IMR-90 (cell line): ENCODE measurements at regions of chr13 and their contacts with region 1.

Region 1: DNA sequence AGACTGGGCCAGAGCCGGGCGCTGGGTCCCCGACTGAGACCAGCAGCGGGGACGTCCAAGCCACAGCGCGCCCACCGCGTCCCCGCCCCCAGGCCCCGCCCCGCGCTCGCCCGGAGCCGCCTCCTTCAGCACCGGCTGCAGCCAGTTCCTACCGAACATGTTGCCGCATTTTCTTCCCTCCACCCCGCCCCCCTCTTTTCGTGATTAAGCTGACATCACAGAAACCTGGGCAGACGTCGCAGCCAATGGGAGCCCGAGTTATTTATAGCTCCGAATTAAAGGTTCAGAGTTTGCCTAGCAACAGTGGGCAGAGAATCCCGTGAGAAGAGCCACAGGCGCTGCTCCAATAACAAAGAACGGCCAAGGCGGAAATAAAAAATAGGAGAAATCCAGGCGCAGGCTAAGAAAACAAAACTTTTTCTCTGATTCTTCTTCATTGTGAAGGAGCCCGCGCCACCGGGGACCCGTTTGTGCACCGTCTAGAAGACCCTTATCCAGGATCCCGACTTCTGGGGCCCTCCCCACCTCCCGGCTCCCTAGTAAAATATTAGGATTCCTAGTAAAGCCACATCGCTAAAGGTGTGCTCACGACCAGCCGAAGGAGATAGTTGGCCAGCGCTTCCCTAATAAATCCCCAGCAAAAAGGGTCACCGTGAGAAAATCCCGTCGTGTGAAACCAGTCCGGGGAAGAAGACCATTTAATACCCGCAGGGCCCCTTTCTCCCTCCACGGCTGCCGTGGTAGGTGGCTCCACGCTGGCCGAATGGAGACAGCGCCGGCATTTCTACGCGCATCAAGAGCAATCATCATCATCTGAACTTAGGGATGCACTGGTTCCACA is 61.7 kb downstream of the SERP2 start:
- DNase-seq: peak; percentile 98
- ATAC-seq: peak; percentile 64
- H3K4me3 ChIP-seq: peak overlapping the region; percentile 77
- H3K27ac ChIP-seq: peak overlapping the region; percentile 74
- H3K4me1 ChIP-seq: peaks cover 8% of the 10 kb centered on the region; the same call in 1 of the 2 replicates
- H3K27me3 ChIP-seq: no peaks in the 10 kb centered on the region
- CTCF ChIP-seq: 0 out of 2 replicates have a peak, but pooled peaks have one; percentile 1
- POLR2A ChIP-seq: peak; percentile 89
- RAD21 ChIP-seq: no peak

Region 2: DNA sequence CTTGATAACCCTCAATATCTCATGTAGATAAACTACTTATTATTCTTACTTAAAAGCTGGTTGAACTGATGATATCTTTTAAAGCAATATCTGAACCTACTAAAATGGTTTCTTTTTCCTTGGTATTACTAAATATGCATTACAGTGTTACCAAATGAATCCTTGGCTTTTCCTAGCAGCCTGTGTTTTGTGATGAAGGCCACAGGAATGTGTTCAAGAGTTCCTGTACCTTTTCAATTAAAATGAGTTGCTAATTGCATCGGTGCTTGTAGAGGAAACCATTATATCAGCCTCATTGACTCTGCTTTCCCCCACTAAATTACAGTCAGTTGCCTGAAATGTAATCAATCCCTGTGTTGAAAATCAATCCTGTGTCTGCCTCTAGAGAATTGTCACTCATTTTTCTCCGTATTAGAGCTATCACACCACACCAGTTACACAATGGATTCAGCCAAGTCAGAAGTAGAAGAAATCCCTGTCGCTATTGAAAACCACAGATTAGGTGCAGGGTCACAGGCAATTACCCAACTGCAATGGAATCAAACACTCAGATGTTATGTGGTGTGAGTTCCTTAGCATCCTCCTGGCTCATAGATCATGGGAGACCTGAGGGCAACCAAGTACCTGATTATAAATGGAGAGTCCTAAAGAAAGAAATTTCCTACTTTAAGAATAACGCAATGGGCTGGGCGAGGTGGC is 1640.6 kb before region 1 on chr13:
- CTCF ChIA-PET with region 1: no interaction called
- POLR2A ChIA-PET with region 1: no interaction called
- dilution Hi-C with region 1: no loop called
- in situ Hi-C with region 1: no loop called
- intact Hi-C with region 1: no loop called
- DNase-seq: no peak
- ATAC-seq: no peak
- H3K4me3 ChIP-seq: no peak overlapping the region
- H3K27ac ChIP-seq: no peak overlapping the region
- H3K4me1 ChIP-seq: no peaks in the 10 kb centered on the region
- H3K27me3 ChIP-seq: no peaks in the 10 kb centered on the region
- CTCF ChIP-seq: no peak
- POLR2A ChIP-seq: no peak
- RAD21 ChIP-seq: no peak

Region 3: GRCh38 chr13:43905435-43906031 is 529.8 kb before region 1 on chr13:
- CTCF ChIA-PET with region 1: interaction called, 11 read pairs
- POLR2A ChIA-PET with region 1: interaction called, 5 read pairs
- dilution Hi-C with region 1: no loop called
- in situ Hi-C with region 1: loop called (anchors 5 kb)
- intact Hi-C with region 1: loop called (anchors 1 kb)
- DNase-seq: peak; percentile 77
- ATAC-seq: peak; percentile 82
- H3K4me3 ChIP-seq: no peak overlapping the region
- H3K27ac ChIP-seq: no peak overlapping the region
- H3K4me1 ChIP-seq: peaks cover 3% of the 10 kb centered on the region
- H3K27me3 ChIP-seq: no peaks in the 10 kb centered on the region; the same call in 1 of the 2 replicates
- CTCF ChIP-seq: peak; percentile 81
- POLR2A ChIP-seq: no peak
- RAD21 ChIP-seq: peak; percentile 88

Region 4: DNA sequence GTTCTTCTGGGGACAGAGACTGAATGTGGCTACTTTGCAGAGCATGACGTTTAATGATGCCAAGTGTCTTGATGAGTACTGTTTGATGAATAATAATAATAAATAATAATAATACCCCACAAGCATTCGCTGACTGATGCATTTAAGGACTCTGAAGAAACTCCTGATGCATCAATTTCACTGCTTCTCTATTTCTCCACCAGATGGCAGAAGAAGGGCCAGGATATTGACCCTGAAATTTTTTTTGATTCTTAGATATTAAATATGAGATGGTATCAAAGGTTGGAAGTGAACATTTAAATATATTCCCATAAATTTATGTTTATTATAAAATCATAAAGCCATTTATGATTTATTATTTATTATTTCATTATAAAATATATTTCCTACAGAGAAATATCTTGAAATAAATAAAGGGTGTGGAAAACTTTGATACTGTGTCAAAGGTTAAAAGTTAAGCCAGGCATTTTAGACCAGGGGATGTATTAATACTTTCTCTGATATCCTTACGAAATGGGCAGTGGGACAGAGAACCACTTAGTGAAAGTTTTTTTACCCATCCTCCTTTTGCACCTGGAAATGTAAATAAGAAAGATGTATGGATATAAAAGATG is 384.8 kb before region 1 on chr13:
- CTCF ChIA-PET with region 1: interaction called, 3 read pairs
- POLR2A ChIA-PET with region 1: interaction called, 7 read pairs
- dilution Hi-C with region 1: no loop called
- in situ Hi-C with region 1: loop called (anchors 5 kb)
- intact Hi-C with region 1: loop called (anchors 1 kb)
- DNase-seq: peak; percentile 52
- ATAC-seq: no peak; the same call in 1 of the 2 replicates
- H3K4me3 ChIP-seq: no peak overlapping the region
- H3K27ac ChIP-seq: no peak overlapping the region
- H3K4me1 ChIP-seq: peaks cover 13% of the 10 kb centered on the region
- H3K27me3 ChIP-seq: peaks cover 5% of the 10 kb centered on the region
- CTCF ChIP-seq: peak; percentile 75
- POLR2A ChIP-seq: no peak
- RAD21 ChIP-seq: peak; percentile 78

Region 5: DNA sequence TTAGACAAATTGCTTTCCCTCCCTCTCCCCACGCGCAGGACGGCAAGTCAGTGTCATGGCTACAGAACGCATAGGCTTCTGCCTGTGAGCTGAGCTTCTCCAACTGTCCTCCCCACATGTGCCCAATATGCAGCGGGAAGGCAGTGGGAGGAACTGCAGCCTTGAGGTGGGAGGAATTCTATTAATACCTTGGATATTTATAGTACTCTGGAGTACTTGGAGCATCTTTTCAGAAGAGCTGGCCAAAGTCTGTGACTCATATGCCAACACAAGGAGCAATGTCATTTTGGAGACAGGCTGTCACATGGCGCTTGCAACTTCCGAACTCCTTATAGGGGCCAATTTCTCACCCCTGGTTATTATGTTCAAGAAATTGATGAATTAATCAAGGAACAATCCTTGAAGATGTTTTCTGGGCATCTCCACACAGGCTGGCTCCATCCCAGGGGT is 306.8 kb before region 1 on chr13:
- CTCF ChIA-PET with region 1: interaction called, 4 read pairs
- POLR2A ChIA-PET with region 1: interaction called, 21 read pairs
- dilution Hi-C with region 1: no loop called
- in situ Hi-C with region 1: no loop called
- intact Hi-C with region 1: loop called (anchors 5 kb)
- DNase-seq: peak; percentile 65
- ATAC-seq: peak; percentile 57
- H3K4me3 ChIP-seq: no peak overlapping the region
- H3K27ac ChIP-seq: no peak overlapping the region
- H3K4me1 ChIP-seq: peaks cover 19% of the 10 kb centered on the region
- H3K27me3 ChIP-seq: no peaks in the 10 kb centered on the region
- CTCF ChIP-seq: no peak
- POLR2A ChIP-seq: no peak
- RAD21 ChIP-seq: no peak; the same call in 1 of the 2 replicates

Region 6: DNA sequence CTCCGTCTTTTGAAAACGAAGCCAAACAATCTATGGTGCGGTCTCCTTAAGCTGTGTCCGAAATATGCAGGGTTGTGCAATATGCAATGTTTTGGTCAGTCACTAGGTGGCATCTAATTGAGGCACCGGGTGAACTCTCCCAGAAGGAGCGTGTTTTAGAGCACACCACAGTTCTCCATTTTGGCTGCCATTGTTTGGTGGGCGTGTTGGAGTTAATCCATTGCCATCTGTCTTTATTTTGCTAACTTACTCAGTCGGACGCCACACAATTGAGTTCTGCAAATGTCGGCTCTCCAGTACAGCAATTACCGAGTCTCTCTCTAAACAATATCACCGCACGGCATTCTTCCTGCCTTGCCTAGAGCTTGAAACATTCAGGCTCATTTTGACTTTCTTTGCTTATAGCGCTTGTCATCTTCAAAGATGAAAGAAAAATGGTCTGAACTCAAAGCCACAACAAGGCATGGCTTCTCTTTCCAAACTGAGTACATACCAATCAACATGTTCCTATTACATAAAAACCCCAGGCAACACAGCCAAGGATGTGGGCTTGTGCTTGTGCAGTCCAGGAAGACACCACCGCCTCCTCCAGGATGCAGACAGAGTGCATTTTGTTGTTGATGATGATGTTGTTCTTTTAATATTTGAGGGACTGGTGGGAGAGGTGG is 243.7 kb before region 1 on chr13:
- CTCF ChIA-PET with region 1: interaction called, 4 read pairs
- POLR2A ChIA-PET with region 1: no interaction called
- dilution Hi-C with region 1: no loop called
- in situ Hi-C with region 1: no loop called
- intact Hi-C with region 1: loop called (anchors 1 kb)
- DNase-seq: peak; percentile 70
- ATAC-seq: peak; percentile 65
- H3K4me3 ChIP-seq: no peak overlapping the region
- H3K27ac ChIP-seq: no peak overlapping the region
- H3K4me1 ChIP-seq: peaks cover 4% of the 10 kb centered on the region; the same call in 1 of the 2 replicates
- H3K27me3 ChIP-seq: no peaks in the 10 kb centered on the region
- CTCF ChIP-seq: peak; percentile 63
- POLR2A ChIP-seq: no peak
- RAD21 ChIP-seq: peak; percentile 68

Region 7: GRCh38 chr13:44243198-44243857 is 192.0 kb before region 1 on chr13:
- CTCF ChIA-PET with region 1: no interaction called
- POLR2A ChIA-PET with region 1: no interaction called
- dilution Hi-C with region 1: no loop called
- in situ Hi-C with region 1: loop called (anchors 10 kb)
- intact Hi-C with region 1: loop called (anchors 1 kb)
- DNase-seq: peak; percentile 74
- ATAC-seq: peak; percentile 54
- H3K4me3 ChIP-seq: no peak overlapping the region
- H3K27ac ChIP-seq: no peak overlapping the region
- H3K4me1 ChIP-seq: peaks cover 2% of the 10 kb centered on the region; the same call in 1 of the 2 replicates
- H3K27me3 ChIP-seq: no peaks in the 10 kb centered on the region
- CTCF ChIP-seq: peak; percentile 59
- POLR2A ChIP-seq: no peak
- RAD21 ChIP-seq: peak; percentile 69

Region 8: DNA sequence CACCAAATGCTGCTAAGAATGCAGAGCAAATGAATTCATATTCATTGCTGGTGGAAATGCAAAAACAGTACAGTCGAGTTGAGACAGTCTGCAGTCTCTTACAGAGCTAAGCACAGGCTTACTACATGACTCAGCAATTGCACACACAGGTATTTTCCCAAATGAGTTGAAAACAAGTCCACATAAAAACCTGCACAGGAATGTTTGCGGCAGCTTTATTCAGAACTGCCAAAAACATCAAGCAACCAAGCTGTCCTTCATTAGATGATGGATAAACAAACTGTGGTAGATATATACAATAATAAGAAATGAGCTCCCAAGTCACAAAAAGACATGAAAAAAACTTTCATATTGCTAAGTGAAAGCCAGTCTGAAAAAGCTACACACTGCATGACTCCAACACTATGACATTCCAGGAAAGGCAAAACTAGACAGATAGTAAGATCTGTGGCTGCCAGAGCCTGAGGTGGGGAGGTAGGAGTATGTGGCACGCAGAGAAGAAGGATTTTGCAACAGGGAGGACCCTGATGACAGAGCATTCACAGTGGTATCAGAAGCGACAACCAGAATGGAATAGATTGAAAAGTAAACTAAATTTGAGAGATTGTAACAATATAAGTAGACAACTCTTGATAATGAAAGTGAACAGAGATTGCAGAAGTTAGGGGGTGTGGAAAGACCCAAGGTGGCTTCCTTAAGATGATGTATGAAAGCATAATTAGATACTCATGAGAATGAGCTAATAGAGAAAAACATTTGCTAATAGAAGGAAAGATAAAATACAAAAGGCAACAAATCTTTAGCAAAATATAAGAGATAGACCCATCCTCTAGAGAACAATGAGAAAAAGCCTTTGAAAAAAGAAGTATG is 88.0 kb after region 1 on chr13:
- CTCF ChIA-PET with region 1: no interaction called
- POLR2A ChIA-PET with region 1: interaction called, 10 read pairs
- dilution Hi-C with region 1: no loop called
- in situ Hi-C with region 1: no loop called
- intact Hi-C with region 1: no loop called
- DNase-seq: peak; percentile 79
- ATAC-seq: peak; percentile 80
- H3K4me3 ChIP-seq: peak overlapping the region; percentile 19; the same call in 1 of the 2 replicates
- H3K27ac ChIP-seq: peak overlapping the region; percentile 44; the same call in 1 of the 2 replicates
- H3K4me1 ChIP-seq: peaks cover 3% of the 10 kb centered on the region
- H3K27me3 ChIP-seq: no peaks in the 10 kb centered on the region
- CTCF ChIP-seq: no peak
- POLR2A ChIP-seq: no peak
- RAD21 ChIP-seq: no peak